ENCODE measurements at regions of chr14 and their contacts with region 1.

Region 1: GRCh38 chr14:104078031-104078455 is 7.5 kb upstream of the ASPG start:
- DNase-seq: peak; percentile 69 to 88 (median 83)
- ATAC-seq: peak; percentile 99
- H3K4me3 ChIP-seq: no peak overlapping the region
- H3K4me3 Mint-ChIP-seq: peak overlapping the region in 6 of 10 donors; percentile 4 to 57 (median 20)
- H3K27ac ChIP-seq: no peak overlapping the region
- H3K27ac Mint-ChIP-seq: peak overlapping the region in 7 of 9 donors; percentile 2 to 86 (median 59)
- H3K4me1 ChIP-seq: peaks cover 4 to 11% of the 10 kb centered on the region in 2 donors
- H3K4me1 Mint-ChIP-seq: peaks cover 7 to 24% (median 17%) of the 10 kb centered on the region in 7 donors
- H3K27me3 ChIP-seq: no peaks in the 10 kb centered on the region
- H3K27me3 Mint-ChIP-seq: peaks cover 3 to 14% (median 6%) of the 10 kb centered on the region in 5 donors

Region 2: DNA sequence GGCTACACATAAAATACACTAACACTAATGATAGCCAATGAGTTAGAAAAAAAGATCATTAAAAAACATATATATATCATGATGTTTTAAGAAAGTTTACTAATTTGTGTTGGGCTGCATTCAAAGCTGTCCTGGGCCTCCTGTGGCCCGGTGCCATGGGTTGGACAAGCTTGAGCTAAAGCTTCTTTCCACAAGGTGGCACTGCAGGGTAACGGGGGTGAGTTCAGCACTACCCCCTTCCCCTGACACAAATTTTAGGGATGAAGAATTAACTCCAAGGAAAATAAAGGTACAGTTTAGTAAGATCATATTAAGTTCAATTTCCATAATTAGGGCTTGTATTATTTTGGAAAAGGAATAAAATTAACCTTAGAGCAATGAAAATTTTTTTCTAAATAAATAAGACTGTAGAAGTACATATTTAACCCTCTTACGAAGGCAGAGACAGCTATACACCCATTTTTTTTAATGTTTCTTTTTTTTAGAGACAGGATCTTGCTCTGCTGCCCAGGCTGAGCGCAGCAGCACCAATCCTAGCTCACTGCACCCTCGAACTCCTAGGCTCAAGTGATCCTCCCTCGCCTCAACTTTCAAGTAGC is 269.5 kb before region 1 on chr14:
- CTCF ChIA-PET with region 1: interaction called, 7 read pairs
- POLR2A ChIA-PET with region 1: no interaction called
- intact Hi-C with region 1: loop called in 1 of 2 experiments (anchors 1 kb)
- DNase-seq: peak; percentile 20 to 71 (median 63)
- ATAC-seq: peak; percentile 82
- H3K4me3 ChIP-seq: no peak overlapping the region
- H3K4me3 Mint-ChIP-seq: no peak overlapping the region
- H3K27ac ChIP-seq: no peak overlapping the region
- H3K27ac Mint-ChIP-seq: no peak overlapping the region
- H3K4me1 ChIP-seq: no peaks in the 10 kb centered on the region
- H3K4me1 Mint-ChIP-seq: peaks cover 3 to 18% (median 6%) of the 10 kb centered on the region in 7 donors
- H3K27me3 ChIP-seq: no peaks in the 10 kb centered on the region
- H3K27me3 Mint-ChIP-seq: no peaks in the 10 kb centered on the region

Region 3: DNA sequence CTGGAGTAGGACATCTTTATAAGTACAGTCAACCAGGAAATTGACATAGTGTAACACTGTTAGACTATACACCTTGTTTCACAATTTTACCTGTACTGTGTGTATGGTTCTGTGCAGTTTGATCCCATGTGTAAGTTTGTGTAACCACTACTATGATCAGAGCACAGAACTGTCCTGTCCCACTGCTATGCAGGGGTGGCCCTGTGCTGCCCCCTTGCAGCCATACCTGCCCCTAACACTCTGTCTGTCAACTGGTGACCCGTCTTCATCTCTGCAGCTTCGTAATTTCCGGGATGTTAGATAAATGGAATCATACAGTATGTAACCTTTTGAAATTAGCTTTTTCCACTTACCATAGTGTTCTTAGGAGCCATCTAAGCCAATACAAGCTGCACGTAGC is 77.0 kb before region 1 on chr14:
- CTCF ChIA-PET with region 1: no interaction called
- POLR2A ChIA-PET with region 1: no interaction called
- intact Hi-C with region 1: no loop called
- DNase-seq: peak in 4 of 9 donors; percentile 5 to 15 (median 12)
- ATAC-seq: no peak
- H3K4me3 ChIP-seq: no peak overlapping the region
- H3K4me3 Mint-ChIP-seq: no peak overlapping the region
- H3K27ac ChIP-seq: no peak overlapping the region
- H3K27ac Mint-ChIP-seq: no peak overlapping the region
- H3K4me1 ChIP-seq: no peaks in the 10 kb centered on the region
- H3K4me1 Mint-ChIP-seq: peaks cover 0 to 1% (median 0%) of the 10 kb centered on the region in 7 donors
- H3K27me3 ChIP-seq: no peaks in the 10 kb centered on the region
- H3K27me3 Mint-ChIP-seq: peaks cover 0 to 12% (median 5%) of the 10 kb centered on the region in 5 donors

Region 4: DNA sequence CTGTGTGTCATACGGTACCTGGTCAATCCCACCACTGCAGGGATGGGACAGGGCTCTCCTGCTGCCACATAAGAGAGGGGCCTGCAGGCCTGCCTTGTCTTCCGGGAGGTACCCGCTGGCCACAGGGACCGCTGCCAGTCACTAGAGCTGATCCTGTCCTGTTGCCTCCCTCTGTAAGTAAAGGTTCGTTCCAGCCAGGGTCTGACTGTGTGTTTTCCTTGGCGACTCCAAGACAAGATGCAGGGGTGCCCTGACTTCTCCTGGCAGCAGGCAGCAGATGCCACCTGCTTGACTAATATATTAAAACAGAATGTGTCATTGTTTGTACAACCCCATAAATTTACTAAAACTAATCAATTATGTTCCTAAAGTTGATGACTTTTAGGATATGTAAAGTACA is 34.0 kb before region 1 on chr14:
- CTCF ChIA-PET with region 1: no interaction called
- POLR2A ChIA-PET with region 1: no interaction called
- intact Hi-C with region 1: no loop called
- DNase-seq: no peak
- ATAC-seq: no peak
- H3K4me3 ChIP-seq: no peak overlapping the region
- H3K4me3 Mint-ChIP-seq: no peak overlapping the region
- H3K27ac ChIP-seq: no peak overlapping the region
- H3K27ac Mint-ChIP-seq: no peak overlapping the region
- H3K4me1 ChIP-seq: no peaks in the 10 kb centered on the region
- H3K4me1 Mint-ChIP-seq: peaks cover 0 to 3% (median 0%) of the 10 kb centered on the region in 7 donors
- H3K27me3 ChIP-seq: peaks cover 0 to 3% of the 10 kb centered on the region in 2 donors
- H3K27me3 Mint-ChIP-seq: peaks cover 14 to 39% (median 25%) of the 10 kb centered on the region in 5 donors

Region 5: GRCh38 chr14:104130974-104131651 is 53.1 kb after region 1 on chr14:
- CTCF ChIA-PET with region 1: interaction called, 6 read pairs
- POLR2A ChIA-PET with region 1: no interaction called
- intact Hi-C with region 1: loop called in 1 of 2 experiments (anchors 1 kb)
- DNase-seq: peak in 1 of 9 donors; percentile 5
- ATAC-seq: no peak
- H3K4me3 ChIP-seq: no peak overlapping the region
- H3K4me3 Mint-ChIP-seq: no peak overlapping the region
- H3K27ac ChIP-seq: no peak overlapping the region
- H3K27ac Mint-ChIP-seq: no peak overlapping the region
- H3K4me1 ChIP-seq: no peaks in the 10 kb centered on the region
- H3K4me1 Mint-ChIP-seq: no peaks in the 10 kb centered on the region
- H3K27me3 ChIP-seq: peaks cover 0 to 14% of the 10 kb centered on the region in 2 donors
- H3K27me3 Mint-ChIP-seq: peaks cover 29 to 72% (median 59%) of the 10 kb centered on the region in 5 donors

Region 6: DNA sequence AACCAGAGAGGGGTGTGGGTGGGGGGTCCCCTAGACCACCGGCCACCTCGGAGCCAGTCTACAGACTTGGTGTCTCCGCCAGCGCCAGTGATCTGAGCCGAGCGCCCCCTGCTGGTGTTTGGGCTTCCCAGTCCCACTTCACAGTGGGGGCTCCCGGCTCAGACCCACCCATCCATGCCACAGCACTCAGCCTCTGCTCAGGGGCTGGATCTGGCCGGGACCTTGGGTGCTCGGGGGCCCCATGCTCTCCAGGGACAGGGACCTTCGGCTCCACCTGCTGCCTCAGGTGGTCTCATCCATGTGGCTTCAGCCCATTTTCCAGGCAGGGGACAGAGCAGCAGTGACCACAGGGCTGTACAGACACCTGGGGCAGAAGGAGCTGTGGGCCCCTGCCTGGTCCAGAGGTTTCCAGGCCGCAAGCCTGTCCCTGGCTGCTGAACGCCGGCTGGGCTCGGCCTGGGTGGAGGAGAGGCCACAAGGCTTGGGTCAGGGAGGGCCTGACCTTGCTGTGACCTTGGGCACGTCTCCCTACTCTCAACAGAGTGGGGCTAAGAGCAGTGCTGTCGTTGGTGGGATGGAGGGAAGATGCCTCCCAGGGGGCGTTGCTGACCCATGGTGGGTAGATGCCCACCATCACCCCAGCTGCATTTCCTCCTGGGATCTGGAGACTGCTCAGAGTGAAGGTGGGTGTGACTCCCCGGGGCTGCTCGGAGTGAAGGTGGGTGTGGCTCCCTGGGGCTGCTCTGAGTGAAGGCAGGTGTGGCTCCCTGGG is 146.6 kb after region 1 on chr14:
- CTCF ChIA-PET with region 1: no interaction called
- POLR2A ChIA-PET with region 1: no interaction called
- intact Hi-C with region 1: no loop called
- DNase-seq: no peak
- ATAC-seq: no peak
- H3K4me3 ChIP-seq: no peak overlapping the region
- H3K4me3 Mint-ChIP-seq: peak overlapping the region in 1 of 10 donors; percentile 30
- H3K27ac ChIP-seq: no peak overlapping the region
- H3K27ac Mint-ChIP-seq: peak overlapping the region in 1 of 9 donors; percentile 33
- H3K4me1 ChIP-seq: peaks cover 0 to 8% of the 10 kb centered on the region in 2 donors
- H3K4me1 Mint-ChIP-seq: peaks cover 12 to 31% (median 26%) of the 10 kb centered on the region in 7 donors
- H3K27me3 ChIP-seq: peaks cover 0 to 5% of the 10 kb centered on the region in 2 donors
- H3K27me3 Mint-ChIP-seq: peaks cover 0 to 25% (median 12%) of the 10 kb centered on the region in 5 donors

Region 7: GRCh38 chr14:104399432-104400151 is 321.5 kb after region 1 on chr14:
- CTCF ChIA-PET with region 1: no interaction called
- POLR2A ChIA-PET with region 1: no interaction called
- intact Hi-C with region 1: loop called in 1 of 2 experiments (anchors 1 kb)
- DNase-seq: no peak
- ATAC-seq: peak; percentile 57
- H3K4me3 ChIP-seq: no peak overlapping the region
- H3K4me3 Mint-ChIP-seq: peak overlapping the region in 5 of 10 donors; percentile 10 to 54 (median 30)
- H3K27ac ChIP-seq: no peak overlapping the region
- H3K27ac Mint-ChIP-seq: peak overlapping the region; percentile 11 to 89 (median 60)
- H3K4me1 ChIP-seq: peaks cover 21 to 30% of the 10 kb centered on the region in 2 donors
- H3K4me1 Mint-ChIP-seq: peaks cover 18 to 59% (median 37%) of the 10 kb centered on the region in 7 donors
- H3K27me3 ChIP-seq: no peaks in the 10 kb centered on the region
- H3K27me3 Mint-ChIP-seq: no peaks in the 10 kb centered on the region

Region 8: GRCh38 chr14:104563742-104564615 is 485.9 kb after region 1 on chr14:
- CTCF ChIA-PET with region 1: interaction called, 16 read pairs
- POLR2A ChIA-PET with region 1: no interaction called
- intact Hi-C with region 1: loop called in 1 of 2 experiments (anchors 1 kb)
- DNase-seq: peak; percentile 50 to 77 (median 63)
- ATAC-seq: peak; percentile 60
- H3K4me3 ChIP-seq: no peak overlapping the region
- H3K4me3 Mint-ChIP-seq: peak overlapping the region in 3 of 10 donors; percentile 4 to 45 (median 41)
- H3K27ac ChIP-seq: no peak overlapping the region
- H3K27ac Mint-ChIP-seq: no peak overlapping the region
- H3K4me1 ChIP-seq: peaks cover 0 to 4% of the 10 kb centered on the region in 2 donors
- H3K4me1 Mint-ChIP-seq: peaks cover 0 to 5% (median 0%) of the 10 kb centered on the region in 7 donors
- H3K27me3 ChIP-seq: no peaks in the 10 kb centered on the region
- H3K27me3 Mint-ChIP-seq: peaks cover 0 to 26% (median 5%) of the 10 kb centered on the region in 5 donors

Region 9: GRCh38 chr14:104708606-104709268 is 630.7 kb after region 1 on chr14:
- CTCF ChIA-PET with region 1: no interaction called
- POLR2A ChIA-PET with region 1: no interaction called
- intact Hi-C with region 1: loop called in 1 of 2 experiments (anchors 5 kb)
- DNase-seq: peak; percentile 51 to 81 (median 66)
- ATAC-seq: peak; percentile 90
- H3K4me3 ChIP-seq: no peak overlapping the region
- H3K4me3 Mint-ChIP-seq: no peak overlapping the region
- H3K27ac ChIP-seq: no peak overlapping the region
- H3K27ac Mint-ChIP-seq: peak overlapping the region in 5 of 9 donors; percentile 32 to 71 (median 52)
- H3K4me1 ChIP-seq: no peaks in the 10 kb centered on the region
- H3K4me1 Mint-ChIP-seq: peaks cover 0 to 5% (median 4%) of the 10 kb centered on the region in 7 donors
- H3K27me3 ChIP-seq: no peaks in the 10 kb centered on the region
- H3K27me3 Mint-ChIP-seq: no peaks in the 10 kb centered on the region

Measured in naive thymus-derived CD4-positive, alpha-beta T cell (primary cell).